Posterior vena cava (tissue), 2 donors: ENCODE measurements at regions of chr4 and their contacts with region 1.

Region 1: DNA sequence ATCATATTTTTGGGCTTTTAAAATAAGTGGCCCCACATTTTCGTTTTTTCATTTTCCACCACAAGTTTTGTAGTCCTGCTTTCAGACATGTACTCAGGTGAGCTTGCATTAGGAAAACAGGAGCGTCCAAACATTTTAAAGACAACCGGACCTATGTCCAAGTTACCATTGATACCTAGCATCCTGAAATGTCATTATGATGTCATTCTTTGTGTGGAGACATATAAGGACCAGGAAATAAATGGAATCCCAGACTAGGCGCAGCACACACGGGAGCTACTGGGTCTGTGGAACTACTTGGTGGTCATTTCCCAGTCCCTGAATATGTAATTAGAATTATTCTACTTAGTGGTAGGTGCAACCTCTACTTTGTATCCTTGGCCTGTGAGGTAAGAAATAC is 875.7 kb downstream of the STIM2 start:
- DNase-seq: no peak

Region 2: DNA sequence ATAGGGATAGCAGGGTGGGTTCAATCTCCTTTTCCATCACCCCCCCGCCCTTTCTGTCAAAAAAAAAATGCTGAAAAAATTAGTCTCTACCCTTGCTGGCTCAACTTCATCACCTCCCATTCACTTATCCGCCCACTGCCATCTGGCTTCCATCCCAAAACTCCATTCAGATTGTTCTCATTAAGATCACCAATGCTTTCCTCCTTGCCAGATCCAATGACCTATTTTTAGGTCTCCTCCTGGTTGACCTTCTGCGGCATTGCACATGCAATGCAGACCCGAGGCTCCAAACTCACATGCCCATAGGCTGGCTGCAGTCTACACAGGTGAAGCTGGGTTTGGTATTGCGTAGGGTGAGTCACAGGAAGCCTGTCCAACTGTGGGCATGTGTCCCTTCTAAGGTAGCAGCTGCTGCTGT is 896.8 kb before region 1 on chr4:
- intact Hi-C with region 1: loop called in 1 of 2 experiments (anchors 5 kb)
- DNase-seq: no peak

Region 3: GRCh38 chr4:27775156-27775555 is 38.8 kb after region 1 on chr4:
- intact Hi-C with region 1: no loop called
- DNase-seq: no peak